Ovary (tissue), 10 donors: ENCODE measurements at regions of chr5 and their contacts with region 1.

Region 1: DNA sequence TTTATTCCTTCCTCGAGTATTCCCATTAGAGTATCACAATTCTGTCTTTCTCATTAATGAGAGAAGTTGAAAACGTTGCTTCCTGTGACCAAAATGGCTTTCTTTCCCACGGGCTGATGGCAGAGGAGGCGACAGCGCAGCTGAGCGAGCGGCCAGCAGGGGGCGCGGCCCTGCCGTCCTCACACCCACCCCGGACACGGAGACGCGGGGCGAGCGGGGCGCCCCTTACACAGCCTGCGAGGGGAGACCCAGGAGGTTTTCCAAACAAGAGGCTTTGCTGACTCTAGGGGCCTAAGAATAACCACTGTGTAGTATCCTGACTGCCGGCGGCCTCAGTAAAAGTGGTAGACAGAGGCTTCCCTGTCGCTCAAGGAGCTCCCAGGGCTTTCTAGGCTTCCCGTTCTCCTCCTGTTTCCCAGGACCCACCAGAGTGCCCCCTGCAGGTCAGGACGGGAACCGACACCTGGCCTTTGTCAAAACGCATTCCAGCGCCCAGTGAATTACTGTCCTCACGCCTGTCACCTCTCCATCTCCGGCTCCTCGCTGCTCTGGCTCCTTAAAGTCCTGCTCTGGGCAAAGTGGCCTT is 27.3 kb upstream of the FGF1 start:
- DNase-seq: peak; percentile 76 to 87 (median 85)
- H3K4me3 ChIP-seq: peak overlapping the region; percentile 45
- H3K27ac ChIP-seq: peak overlapping the region; percentile 52 to 83
- H3K4me1 ChIP-seq: no peaks in the 10 kb centered on the region
- H3K27me3 ChIP-seq: no peaks in the 10 kb centered on the region
- CTCF ChIP-seq: peak; percentile 93 to 99 (median 96)
- EP300 ChIP-seq: no peak
- POLR2A ChIP-seq: no peak

Region 2: DNA sequence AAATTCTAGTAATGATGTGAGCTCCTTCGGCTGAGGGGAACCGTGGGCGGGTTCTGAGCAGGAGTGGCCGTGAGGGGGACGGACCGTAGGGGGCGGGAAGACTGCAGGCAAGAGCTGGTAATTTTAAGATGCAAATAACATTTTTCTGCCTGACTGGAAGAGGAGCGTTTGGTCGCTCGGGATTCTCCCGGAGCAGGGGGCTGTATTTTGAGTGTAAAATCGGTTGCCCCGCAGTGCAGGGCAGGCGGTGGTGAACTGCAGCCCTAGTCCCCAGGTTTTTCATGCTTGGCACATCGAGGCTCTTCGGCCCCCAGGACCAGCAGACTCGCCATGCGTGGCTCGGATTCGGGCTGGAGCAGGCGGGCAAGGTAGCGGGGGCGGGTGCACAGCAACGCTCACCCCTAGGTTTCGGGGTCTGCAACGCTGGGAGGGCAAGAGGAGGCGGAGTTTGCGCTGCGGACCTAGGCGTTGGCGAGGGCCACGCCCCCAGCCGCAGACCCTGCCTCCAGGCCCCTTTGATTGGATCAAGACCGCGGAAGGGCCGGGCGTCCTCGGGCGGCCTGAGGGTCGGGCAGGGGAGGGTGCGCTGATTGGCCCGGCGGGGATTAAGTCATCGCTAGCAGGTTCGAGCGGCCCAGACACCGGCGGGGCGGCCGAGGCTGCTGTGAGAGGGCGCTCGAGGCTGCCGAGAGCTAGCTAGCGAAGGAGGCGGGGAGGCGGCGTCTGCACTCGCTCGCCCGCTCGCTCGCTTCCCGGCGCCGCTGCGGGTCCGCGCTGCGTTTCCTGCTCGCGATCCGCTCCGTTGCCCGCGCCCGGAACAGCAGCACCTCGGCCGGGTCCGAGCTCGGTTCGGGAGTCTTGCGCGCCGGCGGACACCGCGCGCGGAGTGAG is 56.8 kb after region 1 on chr5 and contains the start of gene ARHGAP26:
- intact Hi-C with region 1: loop called in 1 of 4 experiments (anchors 10 kb)
- DNase-seq: peak; percentile 94 to 97 (median 95)
- H3K4me3 ChIP-seq: peak within 1 kb of the TSS; percentile 85
- H3K27ac ChIP-seq: peak within 1 kb of the TSS; percentile 26 to 75
- H3K4me1 ChIP-seq: no peaks in the 10 kb centered on the region
- H3K27me3 ChIP-seq: no peaks in the 10 kb centered on the region
- CTCF ChIP-seq: peak in 2 of 3 donors; percentile 22 to 35
- EP300 ChIP-seq: no peak
- POLR2A ChIP-seq: peak; percentile 99
- total RNA-seq, gene ARHGAP26: 7.1 to 47.1 (median 16.2) TPM

Region 3: DNA sequence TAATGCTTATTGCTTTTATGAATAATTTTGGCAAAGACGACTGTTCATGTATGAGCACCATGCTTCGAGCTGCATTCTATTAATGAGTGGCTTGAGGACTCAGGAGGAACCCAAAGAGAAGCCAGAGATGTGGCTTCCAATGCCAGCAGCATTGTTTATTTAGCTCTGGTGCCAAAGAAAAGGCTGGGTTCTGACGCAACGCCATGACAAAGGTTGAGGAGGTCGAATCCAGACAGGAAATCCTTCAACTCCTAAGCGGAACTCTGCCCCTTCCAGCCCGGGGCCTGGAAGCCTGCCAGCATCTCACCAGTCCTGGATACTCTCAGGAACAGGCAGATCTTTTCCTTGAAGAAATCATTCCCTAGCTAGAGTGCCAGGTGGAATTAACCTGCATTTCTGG is 161.3 kb after region 1 on chr5:
- intact Hi-C with region 1: loop called in 2 of 4 experiments (anchors 5 kb)
- DNase-seq: peak in 4 of 5 donors; percentile 32 to 64 (median 58)
- H3K4me3 ChIP-seq: no peak overlapping the region
- H3K27ac ChIP-seq: no peak overlapping the region
- H3K4me1 ChIP-seq: peaks cover 5% of the 10 kb centered on the region
- H3K27me3 ChIP-seq: no peaks in the 10 kb centered on the region
- CTCF ChIP-seq: no peak
- EP300 ChIP-seq: no peak
- POLR2A ChIP-seq: no peak

Region 4: DNA sequence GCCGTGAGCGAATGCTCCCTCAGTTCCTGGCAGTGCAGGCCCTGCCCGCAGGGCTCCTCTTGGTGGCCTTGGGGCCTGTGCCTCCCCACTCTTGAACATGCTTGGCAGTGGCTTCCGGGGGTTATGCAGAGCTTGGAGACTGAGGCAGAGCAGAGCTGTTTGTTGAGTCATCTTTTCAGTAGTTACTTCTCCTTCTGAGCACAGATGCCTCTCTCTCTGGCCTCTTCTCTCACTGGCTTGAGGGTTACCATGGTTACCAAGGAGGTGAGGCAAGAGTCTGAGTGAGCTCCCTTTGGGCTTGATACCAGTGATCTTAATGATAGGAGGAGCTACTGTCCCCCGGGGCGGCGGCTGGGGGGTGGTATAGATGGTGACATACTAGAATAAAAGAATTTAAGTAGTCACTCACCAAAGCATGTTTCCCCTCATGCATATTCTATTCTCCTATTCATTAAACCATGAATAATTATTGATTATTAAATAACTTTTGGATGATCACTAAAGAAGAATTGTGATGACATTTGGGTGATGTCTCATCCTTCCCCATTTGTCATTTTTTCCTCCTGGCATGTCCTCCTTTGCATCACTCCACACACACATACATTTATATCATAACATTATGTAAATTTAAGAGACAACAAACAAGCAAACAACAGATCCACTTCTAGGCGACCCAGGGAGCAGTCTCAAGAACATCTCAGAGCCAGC is 168.0 kb after region 1 on chr5:
- intact Hi-C with region 1: loop called in 3 of 4 experiments (anchors 2 to 5 kb)
- DNase-seq: no peak
- H3K4me3 ChIP-seq: no peak overlapping the region
- H3K27ac ChIP-seq: no peak overlapping the region
- H3K4me1 ChIP-seq: no peaks in the 10 kb centered on the region
- H3K27me3 ChIP-seq: no peaks in the 10 kb centered on the region
- CTCF ChIP-seq: no peak
- EP300 ChIP-seq: no peak
- POLR2A ChIP-seq: no peak

Region 5: GRCh38 chr5:142888469-142889085 is 175.4 kb after region 1 on chr5:
- intact Hi-C with region 1: loop called in 1 of 4 experiments (anchors 5 kb)
- DNase-seq: peak in 1 of 5 donors; percentile 43
- H3K4me3 ChIP-seq: no peak overlapping the region
- H3K27ac ChIP-seq: no peak overlapping the region
- H3K4me1 ChIP-seq: no peaks in the 10 kb centered on the region
- H3K27me3 ChIP-seq: no peaks in the 10 kb centered on the region
- CTCF ChIP-seq: peak; percentile 26 to 63 (median 62)
- EP300 ChIP-seq: no peak
- POLR2A ChIP-seq: no peak

Region 6: GRCh38 chr5:143066556-143067281 is 353.5 kb after region 1 on chr5:
- intact Hi-C with region 1: no loop called
- DNase-seq: no peak
- H3K4me3 ChIP-seq: no peak overlapping the region
- H3K27ac ChIP-seq: no peak overlapping the region
- H3K4me1 ChIP-seq: peaks cover 15% of the 10 kb centered on the region
- H3K27me3 ChIP-seq: no peaks in the 10 kb centered on the region
- CTCF ChIP-seq: no peak
- EP300 ChIP-seq: no peak
- POLR2A ChIP-seq: no peak